ENCODE measurements at regions of chr1 and their contacts with region 1.

Region 1: GRCh38 chr1:158203693-158204457 is 23.2 kb downstream of the CD1D start:
- DNase-seq: peak; percentile 72
- H3K4me3 Mint-ChIP-seq: no peak overlapping the region
- H3K27ac Mint-ChIP-seq: no peak overlapping the region
- H3K4me1 Mint-ChIP-seq: peaks cover 12% of the 10 kb centered on the region
- H3K27me3 Mint-ChIP-seq: peaks cover 30% of the 10 kb centered on the region

Region 2: GRCh38 chr1:158329733-158330132 is 125.9 kb after region 1 on chr1:
- intact Hi-C with region 1: loop called (anchors 2 kb)
- DNase-seq: peak; percentile 58
- H3K4me3 Mint-ChIP-seq: no peak overlapping the region
- H3K27ac Mint-ChIP-seq: no peak overlapping the region
- H3K4me1 Mint-ChIP-seq: peaks cover 6% of the 10 kb centered on the region
- H3K27me3 Mint-ChIP-seq: no peaks in the 10 kb centered on the region

Region 3: DNA sequence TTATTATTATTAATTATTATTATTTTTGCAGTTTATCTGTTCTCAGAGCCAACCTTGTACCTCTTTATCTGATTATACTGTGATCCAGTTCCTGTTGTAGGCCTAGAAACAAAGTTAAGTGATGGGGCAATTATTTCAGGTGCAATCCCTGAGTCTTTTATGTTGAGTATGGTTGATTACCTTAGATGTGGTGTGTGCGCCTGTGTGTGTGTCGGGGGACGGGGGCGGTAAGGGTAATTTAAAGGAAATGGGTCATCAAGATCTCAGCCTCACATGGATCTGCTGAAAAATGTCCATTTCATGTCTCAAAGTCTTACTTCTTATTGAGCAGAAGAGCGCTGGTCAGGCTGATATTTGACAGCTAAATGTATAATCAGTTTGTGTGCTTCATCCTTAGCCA is 203.2 kb after region 1 on chr1:
- intact Hi-C with region 1: no loop called
- DNase-seq: no peak
- H3K4me3 Mint-ChIP-seq: no peak overlapping the region
- H3K27ac Mint-ChIP-seq: no peak overlapping the region
- H3K4me1 Mint-ChIP-seq: no peaks in the 10 kb centered on the region
- H3K27me3 Mint-ChIP-seq: peaks cover 5% of the 10 kb centered on the region

Region 4: GRCh38 chr1:158496374-158496773 is 292.5 kb after region 1 on chr1:
- intact Hi-C with region 1: loop called (anchors 10 kb)
- DNase-seq: no peak
- H3K4me3 Mint-ChIP-seq: no peak overlapping the region
- H3K27ac Mint-ChIP-seq: no peak overlapping the region
- H3K4me1 Mint-ChIP-seq: no peaks in the 10 kb centered on the region
- H3K27me3 Mint-ChIP-seq: peaks cover 29% of the 10 kb centered on the region

Region 5: DNA sequence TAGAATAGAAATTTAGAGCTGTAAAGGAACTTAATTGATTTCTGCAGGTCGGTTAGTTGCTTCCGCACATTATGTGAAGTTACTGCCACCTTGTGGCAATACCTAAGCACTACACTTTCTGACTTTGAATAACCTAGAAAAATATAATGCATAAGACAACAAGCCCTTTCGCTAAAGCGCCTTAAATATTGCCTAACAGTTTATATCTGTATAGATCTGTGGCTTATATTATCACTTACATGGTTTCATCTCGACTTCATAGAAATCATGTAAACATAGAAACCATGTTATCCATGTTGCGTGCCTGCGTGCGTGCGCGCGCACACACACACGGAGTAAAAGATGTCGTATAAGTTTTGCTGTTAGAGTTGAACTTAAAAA is 794.9 kb after region 1 on chr1:
- intact Hi-C with region 1: loop called (anchors 1 kb)
- DNase-seq: peak; percentile 87
- H3K4me3 Mint-ChIP-seq: peak overlapping the region; percentile 7
- H3K27ac Mint-ChIP-seq: no peak overlapping the region
- H3K4me1 Mint-ChIP-seq: peaks cover 32% of the 10 kb centered on the region
- H3K27me3 Mint-ChIP-seq: no peaks in the 10 kb centered on the region

Region 6: GRCh38 chr1:159071970-159072582 is 868.2 kb after region 1 on chr1:
- intact Hi-C with region 1: loop called (anchors 1 kb)
- DNase-seq: peak; percentile 69
- H3K4me3 Mint-ChIP-seq: peak overlapping the region; percentile 49
- H3K27ac Mint-ChIP-seq: peak overlapping the region; percentile 58
- H3K4me1 Mint-ChIP-seq: peaks cover 35% of the 10 kb centered on the region
- H3K27me3 Mint-ChIP-seq: peaks cover 1% of the 10 kb centered on the region